ENCODE measurements at regions of chr9 and their contacts with region 1.

Region 1: GRCh38 chr9:71768388-71769174 is at the start of gene CEMIP2:
- DNase-seq: peak; percentile 96
- H3K4me3 Mint-ChIP-seq: peak within 1 kb of the TSS; percentile 92
- H3K27ac Mint-ChIP-seq: peak within 1 kb of the TSS; percentile 93
- H3K4me1 Mint-ChIP-seq: peaks cover 35% of the 10 kb centered on the region
- H3K27me3 Mint-ChIP-seq: no peaks in the 10 kb centered on the region
- total RNA-seq, gene CEMIP2: 47.7 and 55.1 TPM in 2 replicates

Region 2: DNA sequence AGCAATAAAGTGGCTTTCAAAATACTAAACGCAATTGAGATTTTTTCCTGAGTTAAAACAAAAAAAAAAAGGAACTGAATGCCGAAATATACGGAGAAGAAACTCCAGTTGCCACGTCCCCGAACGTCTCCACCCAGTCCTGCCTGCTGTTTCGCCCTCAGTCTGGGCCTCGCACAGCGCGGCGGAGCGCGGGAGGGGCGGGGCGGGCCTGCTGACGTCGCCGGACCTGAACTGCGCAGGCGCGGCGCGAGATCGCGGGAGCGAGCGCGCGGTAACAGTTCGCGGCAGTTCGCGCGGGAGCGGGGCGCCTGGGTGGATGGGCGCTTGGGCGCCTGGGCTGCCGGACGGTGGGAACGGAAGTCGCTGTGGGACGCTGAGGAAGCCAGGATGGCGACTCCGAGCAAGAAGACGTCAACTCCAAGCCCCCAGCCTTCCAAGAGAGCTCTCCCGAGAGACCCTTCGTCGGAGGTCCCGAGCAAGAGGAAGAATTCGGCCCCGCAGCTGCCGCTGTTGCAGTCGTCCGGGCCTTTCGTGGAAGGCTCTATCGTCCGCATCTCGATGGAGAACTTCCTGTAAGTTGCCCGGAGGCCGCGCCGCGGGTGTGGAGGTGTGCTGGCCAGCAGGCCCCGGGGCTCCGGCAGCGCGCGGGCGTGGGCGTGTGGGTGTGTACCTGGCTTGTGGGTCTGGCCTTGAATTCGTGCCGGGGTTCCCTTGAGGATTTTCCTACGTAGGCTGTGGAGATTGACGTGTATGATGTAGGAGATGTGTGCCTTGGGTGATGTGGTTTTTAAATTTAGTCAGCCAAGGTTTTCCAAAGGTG is 1509.7 kb before region 1 on chr9 and contains the start of gene SMC5:
- intact Hi-C with region 1: loop called (anchors 5 kb)
- DNase-seq: peak; percentile 98
- H3K4me3 Mint-ChIP-seq: peak within 1 kb of the TSS; percentile 91
- H3K27ac Mint-ChIP-seq: peak within 1 kb of the TSS; percentile 85
- H3K4me1 Mint-ChIP-seq: peaks cover 49% of the 10 kb centered on the region
- H3K27me3 Mint-ChIP-seq: peaks cover 11% of the 10 kb centered on the region
- total RNA-seq, gene SMC5: 47.0 and 50.7 TPM in 2 replicates

Region 3: GRCh38 chr9:71604197-71605063 is 164.2 kb before region 1 on chr9:
- intact Hi-C with region 1: loop called (anchors 1 kb)
- DNase-seq: peak; percentile 93
- H3K4me3 Mint-ChIP-seq: no peak overlapping the region
- H3K27ac Mint-ChIP-seq: no peak overlapping the region
- H3K4me1 Mint-ChIP-seq: no peaks in the 10 kb centered on the region
- H3K27me3 Mint-ChIP-seq: peaks cover 17% of the 10 kb centered on the region

Region 4: GRCh38 chr9:71729816-71730526 is 38.6 kb before region 1 on chr9:
- intact Hi-C with region 1: loop called (anchors 5 kb)
- DNase-seq: peak; percentile 32
- H3K4me3 Mint-ChIP-seq: no peak overlapping the region
- H3K27ac Mint-ChIP-seq: no peak overlapping the region
- H3K4me1 Mint-ChIP-seq: peaks cover 2% of the 10 kb centered on the region
- H3K27me3 Mint-ChIP-seq: no peaks in the 10 kb centered on the region

Region 5: DNA sequence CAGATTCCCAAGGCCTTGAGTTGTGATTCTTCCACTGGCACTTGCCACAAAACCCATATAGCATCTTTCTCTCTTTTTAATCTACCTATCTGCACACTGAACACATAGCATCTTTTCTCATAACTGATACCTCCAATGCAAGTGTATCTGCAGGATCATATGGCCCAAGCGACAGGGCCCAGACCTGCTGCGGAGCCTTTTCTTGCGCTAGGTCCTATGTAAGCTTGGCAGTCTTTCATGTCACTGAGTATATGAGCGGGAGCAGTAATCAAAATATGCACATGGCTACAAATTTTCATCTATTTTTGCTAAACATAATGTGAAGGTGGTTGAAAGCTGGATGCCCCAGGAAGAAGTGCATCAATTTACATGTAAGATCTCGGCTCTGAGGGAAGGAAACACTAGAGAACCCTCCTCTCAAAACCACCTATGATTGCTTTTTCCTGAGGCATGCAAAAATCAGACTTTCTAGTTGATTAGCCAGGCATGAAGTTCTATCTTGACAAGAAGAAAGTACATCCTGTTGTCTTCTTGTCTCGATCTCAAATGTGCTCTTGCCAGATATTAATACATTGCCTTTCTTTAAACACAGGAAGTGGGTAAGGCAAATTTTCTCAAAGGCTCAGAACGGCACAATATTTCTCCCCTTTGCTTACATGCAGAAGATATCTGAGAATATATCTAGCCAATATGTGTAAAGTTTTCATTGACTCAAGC is 26.7 kb after region 1 on chr9:
- intact Hi-C with region 1: loop called (anchors 1 kb)
- DNase-seq: peak; percentile 76
- H3K4me3 Mint-ChIP-seq: peak overlapping the region; percentile 74
- H3K27ac Mint-ChIP-seq: peak overlapping the region; percentile 85
- H3K4me1 Mint-ChIP-seq: peaks cover 32% of the 10 kb centered on the region
- H3K27me3 Mint-ChIP-seq: no peaks in the 10 kb centered on the region

Region 6: DNA sequence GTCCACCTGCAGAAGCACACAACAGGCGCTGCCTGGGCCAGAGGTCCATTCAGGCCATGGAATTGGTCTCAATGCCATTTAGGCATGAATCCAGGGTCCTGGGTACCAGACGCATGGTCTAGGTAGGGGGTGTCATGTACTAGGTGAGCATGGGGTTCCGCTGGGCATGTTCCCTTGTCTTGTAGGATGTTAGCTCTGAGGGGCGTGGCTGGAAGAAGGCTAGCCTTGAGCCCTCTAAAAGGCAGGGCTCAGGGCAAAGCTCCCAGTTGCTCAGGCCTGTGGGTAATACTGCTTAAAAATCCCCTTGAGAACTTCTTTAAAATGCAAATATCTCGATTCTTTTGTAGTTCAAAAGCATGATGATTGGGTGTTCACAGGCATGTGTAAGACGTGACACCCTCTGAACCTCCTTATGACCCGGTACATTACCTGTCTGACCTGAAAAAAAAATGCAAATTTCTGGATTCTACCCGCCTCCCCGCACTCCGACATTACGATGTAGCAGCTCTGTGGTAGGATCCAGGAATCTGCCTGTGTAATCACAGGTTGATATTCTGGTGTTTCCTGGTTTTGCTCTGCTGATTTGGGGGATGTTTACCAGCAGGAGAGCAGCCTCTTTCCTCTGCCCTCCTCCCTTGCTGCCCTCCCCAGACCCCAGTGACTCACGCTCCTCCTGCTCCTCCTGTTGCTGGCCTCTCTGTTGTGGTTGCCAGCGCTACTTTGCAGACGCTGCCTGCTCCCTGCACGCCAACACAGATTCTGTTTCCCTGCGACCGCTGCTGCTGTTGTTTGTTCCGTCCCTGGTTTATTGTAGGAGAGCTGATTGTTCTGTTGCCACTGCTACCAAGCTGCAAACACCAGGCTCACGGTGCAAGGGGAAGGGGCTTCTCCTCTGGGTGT is 758.6 kb after region 1 on chr9:
- intact Hi-C with region 1: loop called (anchors 5 kb)
- DNase-seq: peak; percentile 94
- H3K4me3 Mint-ChIP-seq: peak overlapping the region; percentile 73
- H3K27ac Mint-ChIP-seq: peak overlapping the region; percentile 96
- H3K4me1 Mint-ChIP-seq: peaks cover 56% of the 10 kb centered on the region
- H3K27me3 Mint-ChIP-seq: no peaks in the 10 kb centered on the region